K562 (cell line): ENCODE measurements at regions of chr6 and their contacts with region 1.

Region 1: DNA sequence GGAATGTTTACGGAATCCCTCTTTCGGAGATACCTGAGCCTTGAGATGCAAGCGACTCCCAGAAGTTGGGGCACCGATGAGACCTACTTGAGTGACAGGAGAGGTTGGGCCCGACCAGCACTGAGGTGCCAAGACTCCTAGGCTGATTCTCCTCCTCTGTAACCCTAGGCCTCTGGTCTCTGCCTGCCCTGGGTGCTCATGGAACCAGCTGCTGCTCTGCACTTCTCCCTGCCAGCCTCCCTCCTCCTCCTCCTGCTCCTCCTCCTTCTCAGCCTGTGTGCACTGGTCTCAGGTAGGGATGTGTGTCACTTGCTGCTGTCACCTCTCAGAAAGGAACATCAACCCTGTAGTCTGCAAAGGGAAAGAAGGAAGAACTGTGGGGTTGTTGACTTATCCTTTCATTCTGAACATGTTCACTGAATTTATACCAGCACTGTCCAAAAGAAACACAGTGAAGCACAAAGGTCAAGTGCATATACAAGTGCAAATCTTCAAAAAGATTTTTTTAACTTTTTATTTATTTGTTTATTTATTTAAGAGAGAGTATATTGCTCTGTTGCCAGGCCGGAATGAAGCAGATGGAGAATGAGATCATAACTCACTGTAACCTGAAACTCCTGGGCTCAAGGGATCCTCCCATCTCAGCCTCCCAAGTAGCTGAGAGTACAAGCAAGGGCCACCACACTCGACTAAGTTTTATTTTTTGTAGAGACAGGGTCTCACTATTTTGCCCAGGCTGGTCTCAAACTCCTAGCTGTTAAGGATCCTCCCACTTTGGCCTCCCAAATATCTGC is 913 bp downstream of the BTN2A2 start:
- DNase-seq: peak in 3 of 4 experiments; percentile 33 to 77 (median 40)
- ATAC-seq: peak; percentile 86
- H3K4me3 ChIP-seq: peak overlapping the region; percentile 65
- H3K27ac ChIP-seq: peak overlapping the region; percentile 78
- H3K4me1 ChIP-seq: peaks cover 13 to 27% of the 10 kb centered on the region in 2 experiments
- H3K27me3 ChIP-seq: no peaks in the 10 kb centered on the region
- CTCF ChIP-seq: no peak
- EP300 ChIP-seq: no peak
- POLR2A ChIP-seq: no peak
- RAD21 ChIP-seq: no peak

Region 2: DNA sequence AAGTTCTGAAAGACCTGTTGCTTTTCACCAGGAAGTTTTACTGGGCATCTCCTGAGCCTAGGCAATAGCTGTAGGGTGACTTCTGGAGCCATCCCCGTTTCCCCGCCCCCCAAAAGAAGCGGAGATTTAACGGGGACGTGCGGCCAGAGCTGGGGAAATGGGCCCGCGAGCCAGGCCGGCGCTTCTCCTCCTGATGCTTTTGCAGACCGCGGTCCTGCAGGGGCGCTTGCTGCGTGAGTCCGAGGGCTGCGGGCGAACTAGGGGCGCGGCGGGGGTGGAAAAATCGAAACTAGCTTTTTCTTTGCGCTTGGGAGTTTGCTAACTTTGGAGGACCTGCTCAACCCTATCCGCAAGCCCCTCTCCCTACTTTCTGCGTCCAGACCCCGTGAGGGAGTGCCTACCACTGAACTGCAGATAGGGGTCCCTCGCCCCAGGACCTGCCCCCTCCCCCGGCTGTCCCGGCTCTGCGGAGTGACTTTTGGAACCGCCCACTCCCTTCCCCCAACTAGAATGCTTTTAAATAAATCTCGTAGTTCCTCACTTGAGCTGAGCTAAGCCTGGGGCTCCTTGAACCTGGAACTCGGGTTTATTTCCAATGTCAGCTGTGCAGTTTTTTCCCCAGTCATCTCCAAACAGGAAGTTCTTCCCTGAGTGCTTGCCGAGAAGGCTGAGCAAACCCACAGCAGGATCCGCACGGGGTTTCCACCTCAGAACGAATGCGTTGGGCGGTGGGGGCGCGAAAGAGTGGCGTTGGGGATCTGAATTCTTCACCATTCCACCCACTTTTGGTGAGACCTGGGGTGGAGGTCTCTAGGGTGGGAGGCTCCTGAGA is 296.3 kb before region 1 on chr6 and contains the start of gene HFE:
- CTCF ChIA-PET with region 1: no interaction called
- POLR2A ChIA-PET with region 1: no interaction called
- in situ Hi-C with region 1: no loop called
- intact Hi-C with region 1: no loop called
- DNase-seq: peak; percentile 59 to 75 (median 66)
- ATAC-seq: peak; percentile 92
- H3K4me3 ChIP-seq: peak within 1 kb of the TSS; percentile 56
- H3K27ac ChIP-seq: peak within 1 kb of the TSS; percentile 67
- H3K4me1 ChIP-seq: peaks cover 9% of the 10 kb centered on the region in 2 experiments; a peak in 4 of 5 replicates
- H3K27me3 ChIP-seq: no peaks in the 10 kb centered on the region
- CTCF ChIP-seq: peak in 1 of 3 experiments; percentile 2; a peak in 1 of 6 replicates
- EP300 ChIP-seq: no peak
- POLR2A ChIP-seq: peak; percentile 56; the same call in 1 of the 2 replicates
- RAD21 ChIP-seq: 0 out of 4 replicates have a peak, but pooled peaks of 1 of the 2 experiments have one; percentile 1
- polyA plus RNA-seq, gene HFE: 0.17 to 0.31 TPM

Region 3: DNA sequence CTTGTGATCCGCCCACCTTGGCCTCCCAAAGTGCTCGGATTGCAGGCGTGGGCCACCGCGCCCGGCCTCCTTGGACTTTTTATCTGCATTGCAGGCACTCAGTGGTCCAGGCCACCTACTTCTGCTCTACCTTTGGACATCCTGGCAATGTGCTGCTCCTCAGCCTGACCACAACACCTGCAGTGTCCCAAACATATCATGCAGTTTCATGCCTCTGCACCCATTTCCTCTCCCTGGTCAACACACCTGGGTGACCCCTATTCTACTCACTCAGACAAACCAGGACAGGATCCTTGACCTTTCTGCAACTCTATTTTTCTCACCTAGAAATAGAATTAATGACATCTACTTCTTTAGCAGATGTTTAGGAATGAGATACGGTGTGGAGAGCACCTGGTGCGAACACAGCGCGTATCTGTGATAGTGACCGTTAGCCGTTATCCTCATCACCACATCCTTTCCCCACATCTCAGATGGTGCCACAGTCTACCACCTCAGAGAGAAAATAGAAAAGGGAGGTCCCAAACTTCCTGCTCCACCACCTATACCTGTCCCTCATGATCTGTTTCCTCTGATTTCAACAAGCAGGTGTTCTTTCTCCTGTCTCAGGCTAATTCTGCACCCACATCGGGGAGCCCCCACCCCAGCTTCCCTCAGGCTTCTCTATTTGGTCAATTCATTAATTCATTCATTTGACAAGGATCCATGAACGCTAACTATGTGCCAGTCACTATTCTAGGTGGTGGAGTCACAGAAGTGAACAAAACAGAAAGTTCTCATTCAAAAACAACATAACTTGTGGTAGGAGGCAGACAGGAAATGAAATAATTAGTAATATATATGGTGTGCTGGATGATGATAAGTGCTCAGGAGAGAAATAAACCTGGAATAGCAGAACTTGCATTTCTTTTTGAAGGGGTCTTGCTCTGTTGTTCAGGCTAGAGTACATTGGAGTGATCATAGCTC is 23.1 kb before region 1 on chr6:
- CTCF ChIA-PET with region 1: no interaction called
- POLR2A ChIA-PET with region 1: no interaction called
- in situ Hi-C with region 1: no loop called
- intact Hi-C with region 1: no loop called
- DNase-seq: no peak
- ATAC-seq: no peak
- H3K4me3 ChIP-seq: no peak overlapping the region
- H3K27ac ChIP-seq: no peak overlapping the region
- H3K4me1 ChIP-seq: peaks cover 11 to 18% of the 10 kb centered on the region in 2 experiments
- H3K27me3 ChIP-seq: no peaks in the 10 kb centered on the region
- CTCF ChIP-seq: no peak
- EP300 ChIP-seq: no peak
- POLR2A ChIP-seq: no peak
- RAD21 ChIP-seq: no peak

Region 4: GRCh38 chr6:26396311-26396710 is 12.5 kb after region 1 on chr6:
- CTCF ChIA-PET with region 1: no interaction called
- POLR2A ChIA-PET with region 1: interaction called, 10 read pairs
- in situ Hi-C with region 1: no loop called
- intact Hi-C with region 1: no loop called
- DNase-seq: no peak
- ATAC-seq: no peak
- H3K4me3 ChIP-seq: no peak overlapping the region
- H3K27ac ChIP-seq: no peak overlapping the region
- H3K4me1 ChIP-seq: peaks cover 3 to 29% of the 10 kb centered on the region in 2 experiments
- H3K27me3 ChIP-seq: no peaks in the 10 kb centered on the region
- CTCF ChIP-seq: no peak
- EP300 ChIP-seq: no peak
- POLR2A ChIP-seq: no peak
- RAD21 ChIP-seq: no peak